Thyroid gland (tissue), 4 donors: ENCODE measurements at regions of chr2 and their contacts with region 1.

Region 1: GRCh38 chr2:190507135-190507534 is 27.4 kb downstream of the NEMP2 start:
- DNase-seq: peak; percentile 67 to 81
- H3K4me3 ChIP-seq: no peak overlapping the region
- H3K27ac ChIP-seq: peak overlapping the region; percentile 2 to 57 (median 10)
- H3K4me1 ChIP-seq: peaks cover 11 to 14% of the 10 kb centered on the region in 2 donors
- H3K27me3 ChIP-seq: no peaks in the 10 kb centered on the region
- CTCF ChIP-seq: no peak
- POLR2A ChIP-seq: no peak

Region 2: GRCh38 chr2:190382851-190383250 is 124.3 kb before region 1 on chr2:
- intact Hi-C with region 1: loop called (anchors 5 kb)
- DNase-seq: peak; percentile 21 to 35
- H3K4me3 ChIP-seq: no peak overlapping the region
- H3K27ac ChIP-seq: no peak overlapping the region
- H3K4me1 ChIP-seq: no peaks in the 10 kb centered on the region
- H3K27me3 ChIP-seq: no peaks in the 10 kb centered on the region
- CTCF ChIP-seq: peak; percentile 39 to 89 (median 73)
- POLR2A ChIP-seq: no peak